ENCODE measurements at regions of chr1 and their contacts with region 1.

Region 1: DNA sequence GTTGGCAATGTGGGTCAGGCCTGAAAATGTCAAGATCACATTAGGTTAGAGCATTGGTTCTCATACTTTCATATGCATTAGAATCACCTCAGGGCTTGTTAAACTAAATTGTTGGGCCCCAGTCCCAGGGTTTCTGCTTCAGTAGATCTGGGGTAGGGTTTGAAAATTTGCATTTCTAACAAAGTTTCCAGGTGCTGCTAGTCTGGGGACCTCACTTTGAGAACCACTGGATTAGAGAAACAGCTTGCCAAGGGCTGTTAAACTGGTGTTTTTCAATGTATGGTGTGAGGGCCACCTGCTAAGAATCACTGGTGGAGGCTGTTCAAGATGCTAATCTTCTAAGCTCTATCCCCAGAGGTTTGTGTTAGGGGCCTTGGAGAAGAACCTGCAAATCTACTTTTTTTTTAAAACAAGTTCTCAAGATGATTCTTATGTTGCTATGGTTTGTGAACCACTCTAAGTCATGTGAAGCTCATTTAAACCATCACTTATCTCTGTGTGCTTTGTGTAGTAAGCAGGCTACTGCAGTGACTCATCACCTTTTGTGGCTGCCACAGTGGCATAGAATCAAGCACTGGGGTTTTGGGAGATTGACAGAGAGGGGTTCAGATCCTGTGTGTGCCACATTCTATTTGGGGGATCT is 152.2 kb downstream of the S1PR1 start:
- DNase-seq: peak; percentile 90
- ATAC-seq: peak; percentile 93
- H3K4me3 ChIP-seq: no peak overlapping the region
- H3K27ac ChIP-seq: peak overlapping the region; percentile 96
- H3K4me1 ChIP-seq: peaks cover 34% of the 10 kb centered on the region
- H3K27me3 ChIP-seq: no peaks in the 10 kb centered on the region
- CTCF ChIP-seq: no peak
- EP300 ChIP-seq: no peak; a peak in 1 of 4 replicates
- POLR2A ChIP-seq: no peak
- RAD21 ChIP-seq: peak; percentile 15; the same call in 1 of the 2 replicates

Region 2: DNA sequence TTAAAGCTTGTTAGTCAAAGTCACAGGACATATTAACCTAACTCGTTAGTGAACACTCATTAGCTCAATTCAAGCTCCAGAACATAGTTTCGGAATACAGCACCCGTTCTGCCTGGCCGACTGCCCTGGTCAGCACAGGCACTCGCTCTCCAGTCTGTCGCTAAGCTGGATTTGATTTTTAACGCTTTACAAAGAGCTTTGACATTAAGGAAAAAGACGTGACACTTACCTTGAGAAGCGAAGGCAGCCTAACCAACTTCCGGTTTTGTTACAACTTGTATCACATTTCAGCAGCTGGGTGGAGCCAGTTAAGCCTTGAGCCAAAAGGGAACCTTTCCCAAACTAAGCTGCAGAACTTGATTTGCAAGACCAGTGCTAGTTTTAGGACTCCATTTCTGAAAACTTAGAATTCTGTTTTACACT is 1622.6 kb before region 1 on chr1 and contains the start of gene FRRS1:
- CTCF ChIA-PET with region 1: no interaction called
- POLR2A ChIA-PET with region 1: no interaction called
- RAD21 ChIA-PET with region 1: no interaction called
- SMC1A ChIA-PET with region 1: no interaction called
- in situ Hi-C with region 1: loop called (anchors 25 kb)
- intact Hi-C with region 1: no loop called
- DNase-seq: peak; percentile 85
- ATAC-seq: peak; percentile 86
- H3K4me3 ChIP-seq: peak within 1 kb of the TSS; percentile 96
- H3K27ac ChIP-seq: peak within 1 kb of the TSS; percentile 90
- H3K4me1 ChIP-seq: peaks cover under 1% of the 10 kb centered on the region; the same call in 1 of the 2 replicates
- H3K27me3 ChIP-seq: no peaks in the 10 kb centered on the region
- CTCF ChIP-seq: peak in 2 of 3 experiments; percentile 5 to 19; a peak in 2 of 6 replicates
- EP300 ChIP-seq: no peak
- POLR2A ChIP-seq: peak; percentile 58
- RAD21 ChIP-seq: peak; percentile 13; the same call in 1 of the 2 replicates
- polyA plus RNA-seq, gene FRRS1: 0.22 to 0.55 TPM

Region 3: GRCh38 chr1:99786751-99787501 is 1602.1 kb before region 1 on chr1:
- CTCF ChIA-PET with region 1: no interaction called
- POLR2A ChIA-PET with region 1: no interaction called
- RAD21 ChIA-PET with region 1: no interaction called
- SMC1A ChIA-PET with region 1: no interaction called
- in situ Hi-C with region 1: no loop called
- intact Hi-C with region 1: no loop called
- DNase-seq: peak; percentile 51
- ATAC-seq: peak; percentile 81
- H3K4me3 ChIP-seq: peak overlapping the region; percentile 37; the same call in 1 of the 2 replicates
- H3K27ac ChIP-seq: peak overlapping the region; percentile 92
- H3K4me1 ChIP-seq: peaks cover 45% of the 10 kb centered on the region
- H3K27me3 ChIP-seq: no peaks in the 10 kb centered on the region
- CTCF ChIP-seq: no peak
- EP300 ChIP-seq: no peak
- POLR2A ChIP-seq: no peak
- RAD21 ChIP-seq: no peak

Region 4: DNA sequence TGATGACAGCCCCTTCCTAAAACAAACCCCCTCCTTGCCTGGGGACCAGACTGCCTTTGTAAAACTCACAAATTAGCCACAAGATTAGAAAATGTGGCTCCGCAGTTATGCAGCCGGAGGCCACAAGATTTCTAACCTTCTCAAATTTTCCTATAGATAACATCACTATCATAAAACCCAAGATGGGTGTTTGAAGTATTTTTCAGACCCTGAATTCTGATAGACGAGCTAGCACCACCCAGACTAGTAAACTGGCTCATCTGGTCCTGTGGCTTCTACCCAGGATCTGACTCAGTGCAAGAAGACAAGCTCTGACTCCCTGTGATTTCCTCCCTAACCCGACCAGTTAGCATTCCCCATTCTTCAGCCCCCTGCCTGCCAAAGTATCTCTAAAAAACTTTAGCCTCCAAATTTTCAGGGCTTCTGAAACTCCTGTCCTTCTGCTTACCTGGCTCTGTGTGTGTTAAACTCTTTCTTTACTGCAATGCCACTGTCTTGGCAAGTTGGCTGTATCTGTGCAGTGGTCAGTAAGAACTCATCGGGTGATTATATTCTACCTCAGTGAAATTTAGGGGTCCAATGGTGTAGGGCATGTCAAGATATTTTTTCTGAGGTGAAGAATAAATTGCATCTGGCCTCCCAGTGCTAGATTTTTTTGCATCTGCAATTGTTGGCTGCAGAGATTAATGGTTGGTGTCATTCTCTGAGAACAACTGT is 50.2 kb before region 1 on chr1:
- CTCF ChIA-PET with region 1: no interaction called
- POLR2A ChIA-PET with region 1: no interaction called
- RAD21 ChIA-PET with region 1: no interaction called
- SMC1A ChIA-PET with region 1: no interaction called
- in situ Hi-C with region 1: no loop called
- intact Hi-C with region 1: no loop called
- DNase-seq: no peak
- ATAC-seq: no peak
- H3K4me3 ChIP-seq: no peak overlapping the region
- H3K27ac ChIP-seq: no peak overlapping the region
- H3K4me1 ChIP-seq: no peaks in the 10 kb centered on the region
- H3K27me3 ChIP-seq: no peaks in the 10 kb centered on the region
- CTCF ChIP-seq: no peak
- EP300 ChIP-seq: no peak
- POLR2A ChIP-seq: no peak
- RAD21 ChIP-seq: no peak

Region 5: GRCh38 chr1:101364370-101365120 is 24.5 kb before region 1 on chr1:
- CTCF ChIA-PET with region 1: interaction called, 5 read pairs
- POLR2A ChIA-PET with region 1: interaction called, 12 read pairs
- RAD21 ChIA-PET with region 1: interaction called, 12 read pairs
- SMC1A ChIA-PET with region 1: interaction called, 618 read pairs
- in situ Hi-C with region 1: no loop called
- intact Hi-C with region 1: no loop called
- DNase-seq: no peak
- ATAC-seq: peak; percentile 68
- H3K4me3 ChIP-seq: no peak overlapping the region
- H3K27ac ChIP-seq: peak overlapping the region; percentile 83
- H3K4me1 ChIP-seq: peaks cover 29% of the 10 kb centered on the region
- H3K27me3 ChIP-seq: no peaks in the 10 kb centered on the region
- CTCF ChIP-seq: no peak
- EP300 ChIP-seq: 0 out of 4 replicates have a peak, but pooled peaks of 1 of the 2 experiments have one; percentile 15
- POLR2A ChIP-seq: no peak
- RAD21 ChIP-seq: no peak

Region 6: GRCh38 chr1:101371259-101371658 is 17.8 kb before region 1 on chr1:
- CTCF ChIA-PET with region 1: interaction called, 4 read pairs
- POLR2A ChIA-PET with region 1: interaction called, 45 read pairs
- RAD21 ChIA-PET with region 1: interaction called, 38 read pairs
- SMC1A ChIA-PET with region 1: interaction called, 618 read pairs
- in situ Hi-C with region 1: no loop called
- intact Hi-C with region 1: loop called (anchors 1 kb)
- DNase-seq: peak; percentile 96
- ATAC-seq: peak; percentile 92
- H3K4me3 ChIP-seq: peak overlapping the region; percentile 53
- H3K27ac ChIP-seq: peak overlapping the region; percentile 90
- H3K4me1 ChIP-seq: peaks cover 20% of the 10 kb centered on the region
- H3K27me3 ChIP-seq: no peaks in the 10 kb centered on the region
- CTCF ChIP-seq: no peak
- EP300 ChIP-seq: peak; percentile 70 to 83; a peak in 3 of 4 replicates
- POLR2A ChIP-seq: no peak; the same call in 1 of the 2 replicates
- RAD21 ChIP-seq: peak; percentile 26

Region 7: DNA sequence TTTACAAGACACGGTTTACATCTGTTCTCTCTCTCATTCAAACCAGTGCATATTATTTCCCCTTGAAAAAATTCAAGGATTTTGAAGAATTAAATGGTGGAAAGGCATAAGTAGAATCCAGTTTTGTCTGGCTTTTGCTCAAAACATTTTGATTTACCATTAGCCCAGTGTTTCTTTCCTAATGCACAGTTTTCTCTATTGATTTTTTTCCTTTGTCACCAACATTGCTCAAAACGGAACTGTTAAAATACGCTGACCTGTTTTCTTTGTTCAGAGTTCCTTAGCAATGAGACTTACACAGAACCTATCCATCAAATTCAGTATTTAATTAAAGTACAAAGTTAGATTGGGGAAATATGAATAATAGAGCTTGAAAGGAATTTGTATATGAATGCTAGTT is 10.2 kb after region 1 on chr1:
- CTCF ChIA-PET with region 1: interaction called, 28 read pairs
- POLR2A ChIA-PET with region 1: interaction called, 143 read pairs
- RAD21 ChIA-PET with region 1: interaction called, 225 read pairs
- SMC1A ChIA-PET with region 1: interaction called, 276 read pairs
- in situ Hi-C with region 1: no loop called
- intact Hi-C with region 1: no loop called
- DNase-seq: no peak
- ATAC-seq: peak; percentile 14
- H3K4me3 ChIP-seq: no peak overlapping the region
- H3K27ac ChIP-seq: peak overlapping the region; percentile 74
- H3K4me1 ChIP-seq: peaks cover 13% of the 10 kb centered on the region; the same call in 1 of the 2 replicates
- H3K27me3 ChIP-seq: no peaks in the 10 kb centered on the region
- CTCF ChIP-seq: no peak
- EP300 ChIP-seq: no peak
- POLR2A ChIP-seq: no peak
- RAD21 ChIP-seq: no peak

Region 8: DNA sequence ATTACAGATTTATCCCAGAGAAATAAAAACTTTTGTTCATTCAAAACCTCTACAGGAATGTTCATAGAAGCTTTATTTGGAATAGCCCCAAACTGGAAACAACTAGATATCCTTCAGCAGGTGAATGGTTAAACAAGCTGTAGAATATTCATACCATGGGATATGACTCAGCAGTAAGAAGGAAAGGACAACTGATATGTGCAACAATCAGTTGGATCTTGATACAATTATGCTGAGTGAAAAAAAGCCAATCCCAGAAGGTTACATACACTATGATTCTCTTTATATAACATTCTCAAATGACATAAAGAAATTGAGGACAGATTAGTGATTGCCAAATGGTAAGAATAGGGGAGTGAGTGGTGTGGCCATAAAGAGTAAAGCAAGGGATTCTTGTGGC is 224.5 kb after region 1 on chr1:
- CTCF ChIA-PET with region 1: no interaction called
- POLR2A ChIA-PET with region 1: no interaction called
- RAD21 ChIA-PET with region 1: no interaction called
- SMC1A ChIA-PET with region 1: no interaction called
- in situ Hi-C with region 1: no loop called
- intact Hi-C with region 1: no loop called
- DNase-seq: no peak
- ATAC-seq: no peak
- H3K4me3 ChIP-seq: no peak overlapping the region
- H3K27ac ChIP-seq: no peak overlapping the region
- H3K4me1 ChIP-seq: no peaks in the 10 kb centered on the region
- H3K27me3 ChIP-seq: no peaks in the 10 kb centered on the region
- CTCF ChIP-seq: no peak
- EP300 ChIP-seq: no peak
- POLR2A ChIP-seq: no peak
- RAD21 ChIP-seq: no peak